ENCODE measurements at regions of chr17 and their contacts with region 1.

Region 1: GRCh38 chr17:51189628-51190027 is 23.4 kb downstream of the NME2 start:
- DNase-seq: no peak
- ATAC-seq: no peak
- H3K4me3 ChIP-seq: no peak overlapping the region
- H3K27ac ChIP-seq: no peak overlapping the region
- H3K4me1 ChIP-seq: no peaks in the 10 kb centered on the region
- H3K27me3 ChIP-seq: no peaks in the 10 kb centered on the region
- CTCF ChIP-seq: no peak

Region 2: DNA sequence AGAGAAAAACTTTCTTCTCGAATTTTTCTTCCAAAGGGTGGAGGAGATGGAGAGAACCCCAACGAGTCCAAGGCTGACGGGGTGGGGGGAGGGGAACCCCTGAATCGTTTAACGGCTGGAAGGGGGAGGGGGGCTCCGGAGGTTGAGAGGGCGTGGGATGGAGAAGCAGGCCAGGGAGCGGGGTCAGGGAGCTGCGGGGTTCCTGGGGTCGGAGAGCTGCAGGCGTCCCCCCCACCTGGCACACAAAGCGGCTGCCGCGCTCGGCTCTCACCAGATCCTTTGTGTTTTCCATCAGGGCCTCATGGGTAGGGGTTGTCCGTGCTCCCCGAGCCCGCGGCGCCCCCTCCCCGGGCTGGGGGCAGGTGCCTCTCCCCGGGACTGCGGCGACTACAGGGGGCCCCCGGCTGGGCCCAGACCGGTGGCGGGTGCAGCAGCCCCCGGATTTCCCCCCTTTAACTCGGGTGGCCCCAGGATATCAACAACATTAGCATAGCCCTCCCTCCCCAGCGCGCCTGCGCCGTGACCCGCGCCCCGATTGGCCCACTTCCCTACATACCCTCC is 70.0 kb after region 1 on chr17 and contains the start of gene MBTD1:
- intact Hi-C with region 1: loop called in 1 of 2 experiments (anchors 10 kb)
- DNase-seq: peak in 3 of 4 donors; percentile 95 to 98 (median 96)
- ATAC-seq: no peak
- H3K4me3 ChIP-seq: peak within 1 kb of the TSS; percentile 80 to 91
- H3K27ac ChIP-seq: peak within 1 kb of the TSS; percentile 96 to 98
- H3K4me1 ChIP-seq: peaks cover 15 to 66% of the 10 kb centered on the region in 2 donors
- H3K27me3 ChIP-seq: no peaks in the 10 kb centered on the region
- CTCF ChIP-seq: no peak
- polyA plus RNA-seq, gene MBTD1: 49.2 to 64.9 (median 52.9) TPM